Activated CD4-positive, alpha-beta T cell treated with anti-CD3 and anti-CD28 coated beads, Interleukin-2, amount 10 ng/mL, durations not matched to agents 7 days and 5 days (primary cell): ENCODE measurements at regions of chr18 and their contacts with region 1.

Region 1: DNA sequence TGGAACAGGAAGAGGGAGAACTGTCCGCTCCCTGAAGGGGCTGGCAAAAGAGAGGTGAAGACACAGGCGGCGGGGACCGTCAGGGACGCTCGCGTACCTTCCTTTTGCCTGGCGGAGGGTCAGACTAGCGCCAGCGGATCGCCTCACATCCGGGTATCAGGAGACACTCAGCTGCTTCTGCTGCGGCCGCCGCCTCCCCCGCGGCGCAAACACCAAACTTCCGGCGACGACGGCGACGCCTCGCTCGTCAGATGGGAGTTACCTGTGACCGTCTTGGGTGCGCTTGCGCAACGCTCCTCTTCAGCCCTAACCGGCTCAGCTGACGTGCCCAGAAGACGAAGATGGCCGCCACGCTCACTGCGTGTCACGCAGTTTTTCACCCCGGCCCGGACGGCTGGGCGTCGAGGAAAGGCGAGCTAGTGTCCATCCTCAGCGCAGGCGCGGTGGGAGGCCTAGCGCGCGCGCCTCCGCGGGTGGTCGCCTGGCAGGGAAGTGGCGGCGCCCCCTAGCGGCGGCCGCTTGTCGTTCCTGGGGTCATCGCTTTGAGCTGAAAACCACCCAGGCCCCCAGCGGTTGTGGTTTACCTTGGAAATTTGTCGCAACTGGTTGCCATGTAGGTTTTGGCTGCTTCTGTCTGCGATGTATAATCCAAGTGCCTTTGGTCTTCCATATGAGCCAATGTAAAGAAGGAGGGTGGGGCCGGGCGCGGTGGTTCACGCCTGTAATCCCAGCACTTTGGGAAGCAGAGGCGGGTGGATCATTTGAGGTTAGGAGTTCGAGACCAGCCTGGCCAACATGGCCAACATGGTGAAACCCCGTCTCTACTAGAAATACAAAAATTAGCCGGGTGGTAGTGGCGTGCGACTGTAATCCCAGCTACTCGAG is at the start of gene ESCO1:
- DNase-seq: peak; percentile 95
- H3K4me3 Mint-ChIP-seq: peak within 1 kb of the TSS; percentile 91
- H3K27ac Mint-ChIP-seq: peak within 1 kb of the TSS; percentile 99
- H3K4me1 Mint-ChIP-seq: peaks cover 30% of the 10 kb centered on the region
- H3K27me3 Mint-ChIP-seq: peaks cover 4% of the 10 kb centered on the region
- total RNA-seq, gene ESCO1: 19.3 to 23.3 TPM

Region 2: DNA sequence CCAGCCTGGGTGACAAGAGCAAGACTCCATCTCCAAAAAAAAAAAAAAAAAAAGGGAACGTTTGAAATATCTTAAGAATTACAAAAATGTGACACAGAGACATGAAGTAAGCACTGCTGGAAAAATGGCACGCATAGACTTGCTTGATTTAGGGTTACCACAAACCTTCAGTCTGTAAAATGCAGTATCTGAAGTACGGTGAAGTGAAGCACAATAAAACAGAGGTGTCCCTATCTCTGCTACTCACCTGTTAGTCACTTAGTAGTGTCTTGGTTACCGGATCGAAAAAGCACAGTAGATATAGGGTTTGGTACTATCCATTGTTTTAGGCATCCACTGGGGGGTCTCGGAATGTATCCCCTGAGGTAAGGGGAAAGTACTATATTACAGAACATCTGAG is 370.3 kb before region 1 on chr18:
- CTCF ChIA-PET with region 1: no interaction called
- POLR2A ChIA-PET with region 1: no interaction called
- DNase-seq: no peak
- H3K4me3 Mint-ChIP-seq: no peak overlapping the region
- H3K27ac Mint-ChIP-seq: no peak overlapping the region
- H3K4me1 Mint-ChIP-seq: no peaks in the 10 kb centered on the region
- H3K27me3 Mint-ChIP-seq: peaks cover 2% of the 10 kb centered on the region

Region 3: GRCh38 chr18:21575656-21576055 is 25.1 kb before region 1 on chr18:
- CTCF ChIA-PET with region 1: interaction called, 12 read pairs
- POLR2A ChIA-PET with region 1: no interaction called
- DNase-seq: no peak
- H3K4me3 Mint-ChIP-seq: no peak overlapping the region
- H3K27ac Mint-ChIP-seq: no peak overlapping the region
- H3K4me1 Mint-ChIP-seq: peaks cover 8% of the 10 kb centered on the region
- H3K27me3 Mint-ChIP-seq: no peaks in the 10 kb centered on the region

Region 4: GRCh38 chr18:21612125-21612991 is 11.6 kb after region 1 on chr18 and contains the start of gene SNRPD1:
- CTCF ChIA-PET with region 1: interaction called, 139 read pairs
- POLR2A ChIA-PET with region 1: interaction called, 12 read pairs
- DNase-seq: peak; percentile 88
- H3K4me3 Mint-ChIP-seq: peak within 1 kb of the TSS; percentile 98
- H3K27ac Mint-ChIP-seq: peak within 1 kb of the TSS; percentile 100
- H3K4me1 Mint-ChIP-seq: peaks cover 35% of the 10 kb centered on the region
- H3K27me3 Mint-ChIP-seq: no peaks in the 10 kb centered on the region
- total RNA-seq, gene SNRPD1: 69.7 to 101 TPM

Region 5: GRCh38 chr18:21740724-21741510 is 140.1 kb after region 1 on chr18 and contains the start of gene MIB1:
- CTCF ChIA-PET with region 1: interaction called, 13 read pairs
- POLR2A ChIA-PET with region 1: no interaction called
- DNase-seq: no peak
- H3K4me3 Mint-ChIP-seq: peak within 1 kb of the TSS; percentile 96
- H3K27ac Mint-ChIP-seq: peak within 1 kb of the TSS; percentile 99
- H3K4me1 Mint-ChIP-seq: peaks cover 49% of the 10 kb centered on the region
- H3K27me3 Mint-ChIP-seq: peaks cover 19% of the 10 kb centered on the region
- total RNA-seq, gene MIB1: 36.7 to 37.3 TPM